ENCODE measurements at regions of chr2 and their contacts with region 1.

Region 1: DNA sequence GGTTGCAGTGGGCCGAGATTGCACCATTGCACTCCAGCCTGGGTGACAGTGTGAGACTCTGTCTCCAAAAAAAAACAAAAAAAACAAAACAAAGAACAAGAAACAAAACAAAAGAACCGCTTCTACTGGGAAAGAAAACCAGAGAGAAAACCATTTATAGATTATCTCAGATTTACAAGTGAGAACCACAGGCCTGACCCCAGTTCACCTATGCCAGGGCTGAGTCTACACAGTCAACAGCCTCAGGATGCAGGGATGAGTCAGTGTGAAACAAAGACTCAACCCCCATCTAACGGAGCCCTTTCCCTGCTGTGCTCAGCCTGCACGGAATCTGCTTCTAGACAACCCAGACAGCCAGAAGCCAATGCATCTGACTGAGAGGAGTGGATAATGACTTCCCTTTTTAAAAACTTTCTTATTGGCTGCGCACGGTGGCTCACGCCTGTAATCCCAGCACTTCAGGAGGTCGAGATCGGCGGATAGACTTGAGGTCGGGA is 25.5 kb upstream of the YWHAQ start:
- DNase-seq: peak; percentile 75
- H3K4me3 Mint-ChIP-seq: no peak overlapping the region
- H3K27ac Mint-ChIP-seq: peak overlapping the region; percentile 74
- H3K4me1 Mint-ChIP-seq: peaks cover 19% of the 10 kb centered on the region
- H3K27me3 Mint-ChIP-seq: no peaks in the 10 kb centered on the region

Region 2: GRCh38 chr2:9613291-9613690 is 43.0 kb before region 1 on chr2:
- CTCF ChIA-PET with region 1: no interaction called
- intact Hi-C with region 1: loop called (anchors 1 kb)
- DNase-seq: no peak
- H3K4me3 Mint-ChIP-seq: no peak overlapping the region
- H3K27ac Mint-ChIP-seq: no peak overlapping the region
- H3K4me1 Mint-ChIP-seq: peaks cover 78% of the 10 kb centered on the region
- H3K27me3 Mint-ChIP-seq: no peaks in the 10 kb centered on the region

Region 3: DNA sequence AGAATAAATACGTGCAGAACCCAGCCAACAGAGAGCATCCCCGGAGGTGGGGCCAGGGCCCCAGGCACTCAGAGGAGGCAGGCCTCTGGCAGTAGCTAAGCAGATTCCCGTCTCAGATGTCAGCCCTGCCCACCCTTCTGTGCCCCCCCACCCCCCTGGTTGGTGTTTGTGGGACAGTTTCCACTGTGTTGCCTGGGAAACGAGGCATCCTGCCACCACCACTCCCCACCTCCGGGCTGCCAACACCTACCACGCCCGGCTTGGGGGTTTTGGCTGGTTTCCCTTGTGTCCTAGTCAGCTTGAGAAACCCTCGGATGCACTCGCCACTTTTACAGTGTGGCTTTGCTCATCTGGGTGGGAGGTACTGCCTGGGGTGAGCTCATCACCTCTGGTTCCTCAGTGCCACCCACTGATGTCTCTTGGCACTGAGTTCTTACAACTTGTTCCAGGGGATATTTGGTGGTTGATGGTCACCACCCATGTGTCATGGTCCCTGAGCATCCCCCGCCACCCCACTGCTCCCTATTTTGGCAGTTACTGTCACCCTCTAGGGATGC is 46.8 kb after region 1 on chr2:
- CTCF ChIA-PET with region 1: no interaction called
- intact Hi-C with region 1: loop called (anchors 2 kb)
- DNase-seq: peak; percentile 87
- H3K4me3 Mint-ChIP-seq: no peak overlapping the region
- H3K27ac Mint-ChIP-seq: no peak overlapping the region
- H3K4me1 Mint-ChIP-seq: peaks cover 25% of the 10 kb centered on the region
- H3K27me3 Mint-ChIP-seq: no peaks in the 10 kb centered on the region